ENCODE measurements at regions of chr5 and their contacts with region 1.

Region 1: GRCh38 chr5:33629999-33630398 is 189.2 kb downstream of the TARS1 start:
- DNase-seq: no peak
- H3K4me3 ChIP-seq: no peak overlapping the region
- H3K27ac ChIP-seq: no peak overlapping the region
- H3K4me1 ChIP-seq: no peaks in the 10 kb centered on the region
- H3K27me3 ChIP-seq: no peaks in the 10 kb centered on the region
- CTCF ChIP-seq: no peak
- EP300 ChIP-seq: no peak
- POLR2A ChIP-seq: no peak

Region 2: GRCh38 chr5:33120671-33121070 is 509.3 kb before region 1 on chr5:
- intact Hi-C with region 1: no loop called
- DNase-seq: no peak
- H3K4me3 ChIP-seq: no peak overlapping the region
- H3K27ac ChIP-seq: no peak overlapping the region
- H3K4me1 ChIP-seq: no peaks in the 10 kb centered on the region
- H3K27me3 ChIP-seq: no peaks in the 10 kb centered on the region
- CTCF ChIP-seq: no peak
- EP300 ChIP-seq: no peak
- POLR2A ChIP-seq: no peak

Region 3: GRCh38 chr5:33929925-33930690 is 300.1 kb after region 1 on chr5:
- intact Hi-C with region 1: loop called in 1 of 4 experiments (anchors 10 kb)
- DNase-seq: no peak
- H3K4me3 ChIP-seq: no peak overlapping the region
- H3K27ac ChIP-seq: no peak overlapping the region
- H3K4me1 ChIP-seq: no peaks in the 10 kb centered on the region
- H3K27me3 ChIP-seq: no peaks in the 10 kb centered on the region
- CTCF ChIP-seq: no peak
- EP300 ChIP-seq: no peak
- POLR2A ChIP-seq: no peak